ENCODE measurements at regions of chr16 and their contacts with region 1.

Region 1: GRCh38 chr16:28943281-28943680 is 7.5 kb upstream of the NFATC2IP start:
- DNase-seq: no peak
- H3K4me3 Mint-ChIP-seq: no peak overlapping the region
- H3K27ac Mint-ChIP-seq: no peak overlapping the region
- H3K4me1 Mint-ChIP-seq: peaks cover 25% of the 10 kb centered on the region
- H3K27me3 Mint-ChIP-seq: peaks cover 3% of the 10 kb centered on the region

Region 2: DNA sequence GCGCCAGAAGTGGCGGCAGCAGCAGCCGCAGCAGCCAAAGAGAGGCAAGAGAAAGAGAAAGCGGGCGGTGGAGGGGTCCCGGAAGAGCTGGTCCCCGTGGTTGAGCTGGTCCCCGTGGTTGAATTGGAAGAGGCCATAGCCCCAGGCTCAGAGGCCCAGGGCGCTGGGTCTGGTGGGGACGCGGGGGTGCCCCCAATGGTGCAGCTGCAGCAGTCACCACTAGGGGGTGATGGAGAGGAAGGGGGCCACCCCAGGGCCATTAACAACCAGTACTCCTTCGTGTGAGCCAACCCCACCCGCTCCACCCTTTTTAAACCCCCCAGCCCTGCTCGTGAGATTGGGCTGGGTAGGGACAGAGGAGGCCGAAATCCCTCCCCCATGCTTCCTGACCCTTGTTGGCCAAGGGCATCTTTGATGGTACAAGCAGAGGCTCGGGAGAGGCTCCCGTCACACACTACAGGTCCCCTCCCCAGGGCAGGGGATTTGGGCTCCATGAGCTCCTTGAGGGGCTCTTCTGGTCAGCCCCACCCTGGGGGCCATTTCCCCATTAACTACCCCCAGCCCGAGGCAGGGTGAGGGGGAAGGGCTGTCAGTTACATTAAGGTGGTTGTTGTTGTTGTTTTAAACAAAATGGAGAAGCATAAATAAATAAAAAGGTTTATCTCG is 69.6 kb before region 1 on chr16:
- CTCF ChIA-PET with region 1: interaction called, 13 read pairs
- POLR2A ChIA-PET with region 1: no interaction called
- DNase-seq: peak; percentile 62
- H3K4me3 Mint-ChIP-seq: no peak overlapping the region
- H3K27ac Mint-ChIP-seq: no peak overlapping the region
- H3K4me1 Mint-ChIP-seq: peaks cover 9% of the 10 kb centered on the region
- H3K27me3 Mint-ChIP-seq: no peaks in the 10 kb centered on the region

Region 3: GRCh38 chr16:28917095-28917494 is 26.2 kb before region 1 on chr16:
- CTCF ChIA-PET with region 1: interaction called, 16 read pairs
- POLR2A ChIA-PET with region 1: no interaction called
- DNase-seq: no peak
- H3K4me3 Mint-ChIP-seq: no peak overlapping the region
- H3K27ac Mint-ChIP-seq: no peak overlapping the region
- H3K4me1 Mint-ChIP-seq: no peaks in the 10 kb centered on the region
- H3K27me3 Mint-ChIP-seq: no peaks in the 10 kb centered on the region

Region 4: GRCh38 chr16:28930652-28931051 is 12.6 kb before region 1 on chr16:
- CTCF ChIA-PET with region 1: interaction called, 30 read pairs
- POLR2A ChIA-PET with region 1: no interaction called
- DNase-seq: no peak
- H3K4me3 Mint-ChIP-seq: no peak overlapping the region
- H3K27ac Mint-ChIP-seq: peak overlapping the region; percentile 73
- H3K4me1 Mint-ChIP-seq: peaks cover 32% of the 10 kb centered on the region
- H3K27me3 Mint-ChIP-seq: no peaks in the 10 kb centered on the region

Region 5: DNA sequence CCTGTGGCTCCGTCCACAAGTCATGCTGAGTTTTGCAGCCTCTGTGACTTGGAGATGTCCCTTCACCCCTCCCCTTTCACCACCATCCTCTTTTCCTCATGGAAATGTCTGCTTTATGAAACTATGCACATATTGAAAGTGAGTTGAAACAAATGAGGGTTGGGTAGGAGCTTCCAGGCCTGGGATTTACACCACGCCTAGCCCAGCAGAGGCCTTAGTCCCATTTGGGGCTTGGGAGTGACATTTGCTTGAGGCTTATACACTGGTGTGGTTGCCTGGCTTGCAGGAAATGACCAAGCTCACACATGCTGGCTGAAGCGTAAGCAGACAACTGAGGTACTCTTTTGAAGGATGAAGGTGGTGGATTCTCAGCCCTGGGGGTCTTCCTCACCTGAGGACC is 20.8 kb after region 1 on chr16:
- CTCF ChIA-PET with region 1: no interaction called
- POLR2A ChIA-PET with region 1: no interaction called
- DNase-seq: no peak
- H3K4me3 Mint-ChIP-seq: no peak overlapping the region
- H3K27ac Mint-ChIP-seq: no peak overlapping the region
- H3K4me1 Mint-ChIP-seq: peaks cover 2% of the 10 kb centered on the region
- H3K27me3 Mint-ChIP-seq: no peaks in the 10 kb centered on the region